Endothelial cell of umbilical vein (primary cell): ENCODE measurements at regions of chr16 and their contacts with region 1.

Region 1: GRCh38 chr16:54929090-54930004 is 1.3 kb upstream of the IRX5 start:
- DNase-seq: peak; percentile 98
- H3K4me3 ChIP-seq: peak overlapping the region in 2 of 3 experiments; percentile 46 to 57
- H3K27ac ChIP-seq: peak overlapping the region; percentile 57
- H3K4me1 ChIP-seq: peaks cover 12% of the 10 kb centered on the region
- H3K27me3 ChIP-seq: peaks cover 33 to 56% of the 10 kb centered on the region in 2 experiments
- CTCF ChIP-seq: no peak
- POLR2A ChIP-seq: no peak

Region 2: DNA sequence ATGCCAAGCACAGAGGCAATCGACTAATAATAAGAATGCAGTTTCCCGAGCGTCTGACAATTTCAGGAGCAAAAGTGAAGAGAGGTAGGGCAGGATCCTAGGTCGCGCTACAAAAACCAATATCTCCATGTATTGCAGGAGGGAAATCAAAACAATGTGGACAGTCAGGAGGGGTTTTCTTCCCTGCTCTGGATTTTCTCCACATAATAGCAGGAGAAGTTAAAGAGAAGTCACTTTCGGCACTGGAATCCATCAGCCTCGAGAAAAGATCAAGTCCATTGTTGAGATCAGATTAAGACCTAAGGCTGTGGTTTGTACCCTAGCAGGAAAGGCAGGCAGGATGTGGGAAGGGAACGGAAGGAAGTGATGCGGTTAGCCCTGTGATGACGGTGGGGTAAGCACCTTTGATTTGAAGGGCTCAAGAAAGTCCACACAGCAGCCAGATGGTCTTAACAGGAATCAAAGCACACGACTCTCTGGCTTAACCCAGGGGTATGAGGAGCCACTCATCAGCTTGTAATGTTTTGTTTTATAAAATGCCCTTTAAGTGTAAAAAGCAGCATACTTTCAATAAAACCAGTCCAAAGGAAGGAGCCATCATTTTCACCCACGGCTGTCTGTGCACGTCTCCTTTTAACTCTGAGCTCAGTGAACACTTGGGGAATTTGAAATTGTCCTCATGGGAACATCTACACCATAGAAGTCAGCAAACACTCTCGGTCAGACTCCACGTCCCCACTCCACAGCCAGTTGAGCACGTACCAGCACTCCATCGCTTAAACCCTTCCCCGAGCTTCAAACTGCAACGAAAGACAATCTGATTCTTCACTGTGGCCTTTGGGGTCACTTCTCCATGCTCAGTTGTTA is 1410.6 kb before region 1 on chr16:
- CTCF ChIA-PET with region 1: no interaction called
- POLR2A ChIA-PET with region 1: no interaction called
- dilution Hi-C with region 1: no loop called
- intact Hi-C with region 1: loop called (anchors 5 kb)
- DNase-seq: peak; percentile 92
- H3K4me3 ChIP-seq: peak overlapping the region in 1 of 3 experiments; percentile 51
- H3K27ac ChIP-seq: peak overlapping the region; percentile 97
- H3K4me1 ChIP-seq: peaks cover 39% of the 10 kb centered on the region
- H3K27me3 ChIP-seq: no peaks in the 10 kb centered on the region
- CTCF ChIP-seq: no peak
- POLR2A ChIP-seq: peak; percentile 73

Region 3: DNA sequence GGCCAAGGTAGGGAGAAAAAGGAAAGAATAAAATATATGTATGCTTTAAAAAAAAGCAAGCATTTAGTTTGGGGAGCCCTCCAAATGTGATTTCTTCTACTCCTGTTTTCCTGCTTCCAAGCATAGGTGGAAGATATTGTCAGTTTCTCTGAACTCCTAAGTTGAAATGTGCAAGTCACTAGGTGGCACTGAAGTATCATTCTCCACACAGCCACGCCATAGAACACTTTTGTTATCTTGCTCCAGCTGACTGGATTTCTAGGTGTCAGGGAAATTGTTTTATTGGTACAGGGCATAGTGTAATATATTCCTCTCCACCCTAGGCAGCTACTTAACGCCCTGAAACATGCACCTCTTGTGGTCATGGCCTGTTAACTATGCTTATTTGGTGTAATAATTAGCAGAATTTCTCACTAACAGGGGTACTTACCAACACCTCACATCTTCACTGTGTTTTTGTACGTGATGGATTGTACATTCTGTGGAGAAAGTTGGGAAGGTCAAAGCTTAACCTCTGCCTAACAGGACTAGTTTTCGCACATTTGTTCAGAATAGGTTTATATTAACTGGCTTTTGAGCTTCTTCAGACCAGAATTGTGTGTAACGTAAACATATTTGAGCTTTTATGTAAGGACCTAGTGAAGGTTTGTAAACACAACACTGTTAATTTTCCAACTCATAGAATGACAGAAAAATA is 1156.0 kb before region 1 on chr16:
- CTCF ChIA-PET with region 1: interaction called, 5 read pairs
- POLR2A ChIA-PET with region 1: no interaction called
- dilution Hi-C with region 1: no loop called
- intact Hi-C with region 1: loop called (anchors 2 kb)
- DNase-seq: peak; percentile 79
- H3K4me3 ChIP-seq: no peak overlapping the region
- H3K27ac ChIP-seq: no peak overlapping the region
- H3K4me1 ChIP-seq: peaks cover 7% of the 10 kb centered on the region
- H3K27me3 ChIP-seq: no peaks in the 10 kb centered on the region
- CTCF ChIP-seq: peak; percentile 35 to 56
- POLR2A ChIP-seq: no peak

Region 4: GRCh38 chr16:54077050-54077821 is 852.1 kb before region 1 on chr16:
- CTCF ChIA-PET with region 1: no interaction called
- POLR2A ChIA-PET with region 1: no interaction called
- dilution Hi-C with region 1: no loop called
- intact Hi-C with region 1: loop called (anchors 5 kb)
- DNase-seq: peak; percentile 88
- H3K4me3 ChIP-seq: no peak overlapping the region
- H3K27ac ChIP-seq: peak overlapping the region; percentile 84
- H3K4me1 ChIP-seq: peaks cover 21% of the 10 kb centered on the region
- H3K27me3 ChIP-seq: no peaks in the 10 kb centered on the region
- CTCF ChIP-seq: no peak
- POLR2A ChIP-seq: no peak

Region 5: GRCh38 chr16:54633943-54634362 is 295.4 kb before region 1 on chr16:
- CTCF ChIA-PET with region 1: no interaction called
- POLR2A ChIA-PET with region 1: no interaction called
- dilution Hi-C with region 1: no loop called
- intact Hi-C with region 1: loop called (anchors 5 kb)
- DNase-seq: peak; percentile 21
- H3K4me3 ChIP-seq: no peak overlapping the region
- H3K27ac ChIP-seq: no peak overlapping the region
- H3K4me1 ChIP-seq: no peaks in the 10 kb centered on the region
- H3K27me3 ChIP-seq: no peaks in the 10 kb centered on the region
- CTCF ChIP-seq: peak; percentile 43 to 54
- POLR2A ChIP-seq: no peak

Region 6: DNA sequence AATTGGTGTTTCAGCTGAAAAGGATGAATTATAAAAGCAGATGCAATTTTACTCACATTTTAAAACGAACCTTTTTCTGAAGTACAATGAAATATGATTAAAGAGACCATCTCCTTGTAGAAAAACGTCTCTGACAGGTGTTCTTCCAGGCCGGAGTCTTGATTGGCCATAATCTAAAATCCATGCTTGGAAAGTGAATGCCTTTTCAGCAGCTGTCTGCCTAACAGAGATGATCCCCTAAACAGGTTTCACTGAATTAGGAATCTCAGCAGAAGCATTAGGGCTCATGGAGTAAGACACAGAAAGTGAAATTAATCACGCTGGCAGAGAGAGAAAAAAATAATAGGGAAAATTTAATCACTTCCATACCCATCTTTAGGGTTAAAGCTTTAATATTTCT is 38.0 kb before region 1 on chr16:
- CTCF ChIA-PET with region 1: no interaction called
- POLR2A ChIA-PET with region 1: no interaction called
- dilution Hi-C with region 1: no loop called
- intact Hi-C with region 1: no loop called
- DNase-seq: no peak
- H3K4me3 ChIP-seq: no peak overlapping the region
- H3K27ac ChIP-seq: no peak overlapping the region
- H3K4me1 ChIP-seq: no peaks in the 10 kb centered on the region
- H3K27me3 ChIP-seq: no peaks in the 10 kb centered on the region
- CTCF ChIP-seq: no peak
- POLR2A ChIP-seq: no peak

Region 7: DNA sequence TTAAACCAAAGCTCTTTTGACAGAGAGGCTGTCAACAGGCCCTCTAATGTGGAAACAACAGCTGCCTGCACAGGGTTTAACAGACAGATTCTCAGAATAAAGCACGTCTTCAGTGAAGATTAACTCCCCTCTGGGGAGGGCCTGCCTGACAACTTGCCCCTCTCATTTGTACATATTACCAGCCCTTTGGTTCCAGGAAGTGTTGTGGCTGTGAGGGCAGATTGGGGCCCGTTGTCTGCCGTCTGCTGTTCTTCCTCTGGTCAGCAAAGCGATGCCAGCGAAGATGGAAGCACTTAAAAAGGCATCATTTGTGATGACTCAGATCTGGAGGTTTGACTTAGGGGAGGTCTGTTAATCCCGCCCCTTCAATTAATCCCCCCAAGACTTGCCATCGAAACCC is 217.6 kb after region 1 on chr16:
- CTCF ChIA-PET with region 1: no interaction called
- POLR2A ChIA-PET with region 1: no interaction called
- dilution Hi-C with region 1: no loop called
- intact Hi-C with region 1: no loop called
- DNase-seq: no peak
- H3K4me3 ChIP-seq: no peak overlapping the region
- H3K27ac ChIP-seq: no peak overlapping the region
- H3K4me1 ChIP-seq: no peaks in the 10 kb centered on the region
- H3K27me3 ChIP-seq: no peaks in the 10 kb centered on the region
- CTCF ChIP-seq: no peak
- POLR2A ChIP-seq: no peak

Region 8: DNA sequence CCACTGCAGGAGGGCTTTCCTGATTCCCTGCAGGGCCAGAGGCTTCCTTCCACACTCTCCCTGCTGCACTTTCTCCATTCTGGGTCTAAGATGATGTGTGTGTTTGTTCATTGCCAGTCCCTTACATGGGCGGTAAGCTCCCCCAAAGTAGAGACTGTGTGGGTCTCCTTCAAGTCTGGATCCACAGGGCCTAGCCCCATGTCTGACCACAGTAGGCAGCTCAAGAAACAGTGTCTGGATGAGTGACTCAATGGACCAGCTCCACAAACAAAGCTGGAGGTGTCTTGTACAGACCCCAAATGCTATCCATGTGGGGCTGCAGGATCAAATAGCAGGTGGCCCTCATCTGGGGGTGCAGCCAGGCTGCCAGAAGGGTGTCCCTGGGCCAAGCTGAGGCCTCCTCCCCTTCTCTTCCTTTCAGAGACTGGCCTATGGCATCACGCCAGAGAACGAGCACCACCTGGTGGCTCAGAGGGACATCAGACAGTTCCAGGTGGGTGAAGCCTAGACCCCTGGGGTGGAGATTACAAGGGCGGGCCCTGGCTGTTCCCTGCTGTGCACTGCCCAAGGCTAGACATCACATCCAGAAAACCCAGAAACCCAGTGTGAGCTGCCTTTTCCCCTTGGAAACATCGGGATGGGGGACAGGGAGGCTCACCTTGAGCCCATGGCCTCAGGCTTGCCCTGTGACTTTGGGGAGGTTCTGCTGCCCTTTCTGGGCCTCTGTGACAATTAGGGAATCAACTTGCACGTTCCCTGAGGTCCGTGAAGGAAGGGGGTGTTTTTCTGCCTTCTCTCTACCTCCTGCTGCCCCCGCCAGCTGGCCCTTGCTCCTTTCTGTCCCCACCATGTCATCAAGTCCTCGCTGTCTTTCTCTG is 772.3 kb after region 1 on chr16:
- CTCF ChIA-PET with region 1: no interaction called
- POLR2A ChIA-PET with region 1: no interaction called
- dilution Hi-C with region 1: no loop called
- intact Hi-C with region 1: loop called (anchors 10 kb)
- DNase-seq: peak; percentile 49
- H3K4me3 ChIP-seq: no peak overlapping the region
- H3K27ac ChIP-seq: no peak overlapping the region
- H3K4me1 ChIP-seq: peaks cover 8% of the 10 kb centered on the region
- H3K27me3 ChIP-seq: peaks cover 7 to 8% of the 10 kb centered on the region in 2 experiments
- CTCF ChIP-seq: peak; percentile 65 to 69
- POLR2A ChIP-seq: no peak